ENCODE measurements at regions of chr4 and their contacts with region 1.

Region 1: GRCh38 chr4:67746797-67747495 is 7.2 kb downstream of the GNRHR start:
- DNase-seq: peak in 1 of 2 donors; percentile 58
- ATAC-seq: peak in 2 of 3 donors; percentile 39 to 47
- H3K4me3 ChIP-seq: no peak overlapping the region
- H3K4me3 Mint-ChIP-seq: no peak overlapping the region
- H3K27ac ChIP-seq: no peak overlapping the region
- H3K27ac Mint-ChIP-seq: no peak overlapping the region
- H3K4me1 ChIP-seq: no peaks in the 10 kb centered on the region
- H3K4me1 Mint-ChIP-seq: peaks cover 0 to 5% of the 10 kb centered on the region in 2 donors
- H3K27me3 ChIP-seq: no peaks in the 10 kb centered on the region
- H3K27me3 Mint-ChIP-seq: no peaks in the 10 kb centered on the region
- CTCF ChIP-seq: peak; percentile 74

Region 2: DNA sequence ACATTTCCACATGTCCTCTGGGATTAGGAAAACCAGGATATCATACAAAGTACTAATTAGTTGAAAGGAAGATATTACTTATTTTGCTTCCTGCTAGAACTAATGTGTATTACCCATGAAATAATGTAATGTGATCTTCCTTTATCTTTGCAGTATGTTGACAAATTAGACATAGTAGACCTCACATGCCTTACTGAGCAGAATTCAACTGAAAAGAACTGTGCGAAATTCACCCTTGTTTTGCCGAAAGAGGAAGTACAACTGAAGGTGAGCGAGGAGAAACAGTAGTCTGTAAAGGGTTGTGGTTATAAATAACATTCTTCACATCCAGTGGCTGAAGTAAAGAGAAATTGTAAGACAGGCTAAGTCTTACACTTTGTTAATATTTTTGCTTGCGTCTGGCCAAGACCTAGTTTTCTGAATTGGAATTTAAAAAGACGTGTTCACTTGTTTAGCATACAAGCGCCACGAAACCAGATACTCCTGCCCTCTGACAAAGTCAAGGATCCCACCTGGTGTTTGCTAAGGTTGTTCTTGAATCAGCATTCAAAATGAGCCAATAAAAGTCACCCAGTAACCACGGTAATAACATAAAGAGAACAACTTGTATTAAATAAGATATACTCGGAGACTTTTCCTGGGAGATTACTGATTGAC is 171.6 kb before region 1 on chr4:
- intact Hi-C with region 1: no loop called
- DNase-seq: peak in 1 of 2 donors; percentile 52
- ATAC-seq: peak in 2 of 3 donors; percentile 37 to 58
- H3K4me3 ChIP-seq: no peak overlapping the region
- H3K4me3 Mint-ChIP-seq: no peak overlapping the region
- H3K27ac ChIP-seq: peak overlapping the region; percentile 50
- H3K27ac Mint-ChIP-seq: peak overlapping the region; percentile 49 to 67
- H3K4me1 ChIP-seq: peaks cover 4% of the 10 kb centered on the region
- H3K4me1 Mint-ChIP-seq: peaks cover 16 to 27% of the 10 kb centered on the region in 2 donors
- H3K27me3 ChIP-seq: no peaks in the 10 kb centered on the region
- H3K27me3 Mint-ChIP-seq: no peaks in the 10 kb centered on the region
- CTCF ChIP-seq: no peak

Region 3: GRCh38 chr4:67762086-67762485 is 15.1 kb after region 1 on chr4:
- intact Hi-C with region 1: no loop called
- DNase-seq: no peak
- ATAC-seq: peak; percentile 38 to 77 (median 48)
- H3K4me3 ChIP-seq: no peak overlapping the region
- H3K4me3 Mint-ChIP-seq: no peak overlapping the region
- H3K27ac ChIP-seq: no peak overlapping the region
- H3K27ac Mint-ChIP-seq: no peak overlapping the region
- H3K4me1 ChIP-seq: no peaks in the 10 kb centered on the region
- H3K4me1 Mint-ChIP-seq: peaks cover 5% of the 10 kb centered on the region in 2 donors
- H3K27me3 ChIP-seq: no peaks in the 10 kb centered on the region
- H3K27me3 Mint-ChIP-seq: no peaks in the 10 kb centered on the region
- CTCF ChIP-seq: no peak

Region 4: DNA sequence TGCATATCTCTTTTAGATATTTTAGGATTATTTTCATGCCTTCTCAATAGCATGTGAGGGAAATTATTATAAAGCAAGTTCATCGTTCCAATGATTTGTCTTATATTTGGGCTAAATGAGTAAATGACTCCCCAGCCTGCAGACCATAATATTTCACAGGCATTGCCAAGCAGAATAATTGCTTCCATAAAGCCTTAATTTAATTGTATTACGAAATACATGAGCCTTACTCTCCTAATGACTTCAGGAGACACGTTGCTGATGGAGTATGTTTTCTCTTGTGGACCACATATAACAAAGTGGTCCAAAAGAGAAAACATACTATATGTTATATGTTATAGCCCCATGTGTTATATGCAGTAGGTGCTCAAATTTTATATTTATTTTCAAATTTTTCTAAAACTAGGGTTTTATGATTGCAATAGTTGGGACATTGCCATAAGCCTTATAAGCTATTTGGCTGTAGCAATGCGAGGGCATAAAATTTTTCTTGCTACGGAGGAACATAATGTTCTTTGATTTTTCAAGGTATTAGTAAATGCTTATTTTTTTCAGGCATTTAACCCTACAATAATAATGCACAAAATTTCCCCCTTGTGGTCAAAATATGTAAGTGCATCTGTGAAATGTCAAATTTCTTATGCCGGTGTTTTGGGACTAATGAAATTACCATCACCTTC is 163.1 kb after region 1 on chr4:
- intact Hi-C with region 1: loop called (anchors 1 kb)
- DNase-seq: peak in 1 of 2 donors; percentile 45
- ATAC-seq: no peak
- H3K4me3 ChIP-seq: no peak overlapping the region
- H3K4me3 Mint-ChIP-seq: no peak overlapping the region
- H3K27ac ChIP-seq: no peak overlapping the region
- H3K27ac Mint-ChIP-seq: no peak overlapping the region
- H3K4me1 ChIP-seq: no peaks in the 10 kb centered on the region
- H3K4me1 Mint-ChIP-seq: no peaks in the 10 kb centered on the region
- H3K27me3 ChIP-seq: no peaks in the 10 kb centered on the region
- H3K27me3 Mint-ChIP-seq: peaks cover 2 to 6% of the 10 kb centered on the region in 2 donors
- CTCF ChIP-seq: peak; percentile 82

Region 5: GRCh38 chr4:67988991-67989390 is 242.0 kb after region 1 on chr4:
- intact Hi-C with region 1: no loop called
- DNase-seq: no peak
- ATAC-seq: no peak
- H3K4me3 ChIP-seq: no peak overlapping the region
- H3K4me3 Mint-ChIP-seq: no peak overlapping the region
- H3K27ac ChIP-seq: no peak overlapping the region
- H3K27ac Mint-ChIP-seq: no peak overlapping the region
- H3K4me1 ChIP-seq: no peaks in the 10 kb centered on the region
- H3K4me1 Mint-ChIP-seq: no peaks in the 10 kb centered on the region
- H3K27me3 ChIP-seq: no peaks in the 10 kb centered on the region
- H3K27me3 Mint-ChIP-seq: peaks cover 0 to 8% of the 10 kb centered on the region in 2 donors
- CTCF ChIP-seq: no peak

Measured in natural killer cell (primary cell).